Psoas muscle (tissue), 8 donors: ENCODE measurements at regions of chr3 and their contacts with region 1.

Region 1: DNA sequence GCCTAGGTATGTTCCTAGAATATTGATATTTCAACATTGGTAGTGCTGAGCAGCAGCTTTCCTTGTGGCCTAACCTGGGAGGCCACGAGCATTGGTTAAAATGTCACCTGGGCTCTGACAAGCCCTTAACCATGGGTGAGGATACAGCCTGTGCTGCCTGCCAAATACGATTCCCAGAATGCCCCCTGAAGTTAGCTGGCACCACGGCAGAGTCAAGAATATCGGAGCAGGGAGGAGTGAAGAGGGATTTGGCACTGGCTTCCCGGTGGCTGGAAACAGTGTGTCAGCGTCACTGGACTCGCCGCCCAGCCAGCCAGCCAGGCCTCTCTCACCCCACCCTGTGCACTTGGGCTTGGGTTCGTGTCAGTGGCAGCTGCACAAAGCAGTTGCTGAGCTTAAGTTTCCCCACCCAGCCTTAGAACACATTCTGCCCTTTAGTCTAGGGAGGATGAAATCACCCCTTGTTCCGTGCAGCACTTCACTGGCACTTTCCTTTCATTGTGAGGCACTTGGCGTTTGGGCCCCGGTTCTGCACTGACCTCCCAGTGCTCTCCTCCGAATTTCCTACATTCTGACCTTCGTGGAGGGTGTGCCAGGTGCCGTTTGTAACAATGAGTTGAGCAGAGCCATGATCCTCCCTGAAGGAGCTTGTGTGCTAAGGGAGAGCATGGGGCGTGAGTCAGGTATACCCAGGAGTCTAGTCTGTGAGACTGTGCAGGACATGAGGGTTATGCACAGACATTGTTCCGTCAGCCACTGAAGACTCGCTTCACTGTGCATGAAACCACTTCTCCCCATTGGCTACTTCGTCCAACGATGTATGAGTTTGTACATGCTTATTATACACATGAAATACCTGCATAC is 152.8 kb upstream of the BHLHE40 start:
- DNase-seq: peak; percentile 87 to 95
- ATAC-seq: peak; percentile 81 to 89 (median 89)
- H3K4me3 ChIP-seq: peak overlapping the region; percentile 45
- H3K27ac ChIP-seq: peak overlapping the region; percentile 84
- H3K4me1 ChIP-seq: peaks cover 57% of the 10 kb centered on the region
- H3K27me3 ChIP-seq: no peaks in the 10 kb centered on the region
- CTCF ChIP-seq: no peak

Region 2: GRCh38 chr3:4680881-4681300 is 145.6 kb before region 1 on chr3:
- intact Hi-C with region 1: no loop called
- DNase-seq: no peak
- ATAC-seq: no peak
- H3K4me3 ChIP-seq: no peak overlapping the region
- H3K27ac ChIP-seq: no peak overlapping the region
- H3K4me1 ChIP-seq: no peaks in the 10 kb centered on the region
- H3K27me3 ChIP-seq: no peaks in the 10 kb centered on the region
- CTCF ChIP-seq: no peak

Region 3: DNA sequence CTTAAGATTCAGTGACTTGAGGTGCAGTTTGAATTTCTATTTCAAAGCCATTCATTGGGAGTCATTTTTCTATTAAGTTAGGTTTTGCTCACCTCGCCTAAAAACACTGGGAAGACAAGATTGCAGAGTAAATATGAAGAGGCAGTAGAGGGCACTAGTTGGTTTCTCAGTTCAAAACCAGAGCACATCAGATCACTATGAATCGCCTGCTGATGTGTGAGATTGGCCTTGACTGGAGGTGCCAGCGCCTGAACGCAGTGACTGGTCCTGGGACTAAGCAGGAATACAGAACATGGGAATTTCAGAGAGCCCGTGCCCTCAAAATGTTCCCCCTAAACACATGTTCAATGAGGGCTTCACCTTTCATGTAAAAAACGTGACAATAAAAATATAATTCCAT is 104.4 kb before region 1 on chr3:
- intact Hi-C with region 1: loop called in 1 of 2 experiments (anchors 5 kb)
- DNase-seq: peak; percentile 51 to 72
- ATAC-seq: peak; percentile 80 to 90 (median 84)
- H3K4me3 ChIP-seq: no peak overlapping the region
- H3K27ac ChIP-seq: peak overlapping the region; percentile 42
- H3K4me1 ChIP-seq: peaks cover 48% of the 10 kb centered on the region
- H3K27me3 ChIP-seq: no peaks in the 10 kb centered on the region
- CTCF ChIP-seq: peak; percentile 51

Region 4: DNA sequence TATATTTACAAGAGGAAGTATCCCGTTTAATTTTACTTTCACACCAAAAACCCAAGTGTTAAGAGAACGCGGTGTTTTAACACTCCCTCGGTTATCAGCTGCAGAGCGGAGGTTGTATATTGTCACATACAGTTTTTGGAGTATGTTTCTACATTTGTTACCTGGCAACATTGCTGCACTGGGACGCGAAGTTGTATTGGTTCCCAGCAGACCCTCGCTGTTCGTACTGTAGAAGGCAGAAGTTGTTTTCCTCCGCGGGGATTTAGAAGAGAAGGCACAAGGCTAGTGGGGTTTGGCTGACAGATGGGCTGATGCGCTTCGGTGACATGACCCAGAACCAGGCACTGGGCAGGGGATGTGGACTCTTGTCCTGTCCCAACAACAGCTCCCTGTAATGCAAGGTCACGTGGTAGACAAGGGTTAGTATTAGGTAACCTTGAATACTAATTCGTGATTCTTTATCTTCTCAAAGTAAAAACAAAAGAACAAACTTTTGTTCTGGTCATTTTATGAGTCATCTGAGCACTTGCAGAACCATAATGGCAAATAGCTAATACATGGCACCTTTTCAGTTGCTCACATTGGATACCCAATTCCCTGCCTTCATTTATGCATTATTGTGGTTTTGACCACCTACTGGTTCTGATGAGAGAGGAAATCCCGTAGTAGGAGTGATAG is 77.6 kb before region 1 on chr3:
- intact Hi-C with region 1: loop called in 1 of 2 experiments (anchors 5 kb)
- DNase-seq: no peak
- ATAC-seq: no peak
- H3K4me3 ChIP-seq: no peak overlapping the region
- H3K27ac ChIP-seq: peak overlapping the region; percentile 85
- H3K4me1 ChIP-seq: peaks cover 36% of the 10 kb centered on the region
- H3K27me3 ChIP-seq: no peaks in the 10 kb centered on the region
- CTCF ChIP-seq: no peak

Region 5: GRCh38 chr3:4978204-4978965 is 151.9 kb after region 1 on chr3:
- intact Hi-C with region 1: loop called (anchors 2 to 5 kb)
- DNase-seq: peak; percentile 98
- ATAC-seq: peak; percentile 63 to 75 (median 70)
- H3K4me3 ChIP-seq: peak overlapping the region; percentile 99
- H3K27ac ChIP-seq: peak overlapping the region; percentile 100
- H3K4me1 ChIP-seq: peaks cover 17% of the 10 kb centered on the region
- H3K27me3 ChIP-seq: no peaks in the 10 kb centered on the region
- CTCF ChIP-seq: no peak

Region 6: GRCh38 chr3:5057857-5058324 is 231.4 kb after region 1 on chr3:
- intact Hi-C with region 1: loop called in 1 of 2 experiments (anchors 2 kb)
- DNase-seq: peak; percentile 63 to 77
- ATAC-seq: peak; percentile 69 to 81 (median 72)
- H3K4me3 ChIP-seq: no peak overlapping the region
- H3K27ac ChIP-seq: no peak overlapping the region
- H3K4me1 ChIP-seq: peaks cover 20% of the 10 kb centered on the region
- H3K27me3 ChIP-seq: no peaks in the 10 kb centered on the region
- CTCF ChIP-seq: peak; percentile 85